ENCODE measurements at regions of chr7 and their contacts with region 1.

Region 1: DNA sequence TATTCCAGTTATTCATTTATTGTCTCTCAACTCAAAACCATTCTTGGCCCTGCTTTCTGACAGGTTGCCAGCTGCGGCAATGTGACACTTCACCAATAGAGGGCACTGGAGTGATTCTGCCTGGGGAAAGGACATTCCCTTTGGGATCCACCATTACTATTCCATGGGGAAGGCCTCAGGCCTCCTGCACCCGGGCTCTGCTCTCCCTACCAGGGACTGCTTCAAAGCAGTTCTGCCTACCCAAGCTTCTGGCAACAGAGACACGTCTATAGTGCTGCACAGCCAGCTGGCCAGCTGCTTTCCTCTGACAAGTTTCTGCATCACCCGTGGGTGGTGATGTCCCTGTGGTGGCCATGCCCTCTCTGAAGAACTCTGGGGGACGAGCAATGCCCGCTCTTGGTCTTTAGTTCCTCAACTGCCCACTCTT is 163.8 kb downstream of the ELMO1 start:
- DNase-seq: peak; percentile 43
- CTCF ChIP-seq: peak; percentile 89

Region 2: GRCh38 chr7:36615852-36616540 is 668.8 kb before region 1 on chr7:
- in situ Hi-C with region 1: no loop called
- DNase-seq: no peak
- CTCF ChIP-seq: no peak

Region 3: GRCh38 chr7:36840904-36841303 is 443.9 kb before region 1 on chr7:
- in situ Hi-C with region 1: no loop called
- DNase-seq: no peak
- CTCF ChIP-seq: no peak

Region 4: GRCh38 chr7:37081436-37081835 is 203.4 kb before region 1 on chr7:
- in situ Hi-C with region 1: no loop called
- DNase-seq: no peak
- CTCF ChIP-seq: no peak

Region 5: GRCh38 chr7:37342688-37343471 is 58.1 kb after region 1 on chr7:
- in situ Hi-C with region 1: loop called (anchors 5 kb)
- DNase-seq: no peak
- CTCF ChIP-seq: peak; percentile 33

Region 6: DNA sequence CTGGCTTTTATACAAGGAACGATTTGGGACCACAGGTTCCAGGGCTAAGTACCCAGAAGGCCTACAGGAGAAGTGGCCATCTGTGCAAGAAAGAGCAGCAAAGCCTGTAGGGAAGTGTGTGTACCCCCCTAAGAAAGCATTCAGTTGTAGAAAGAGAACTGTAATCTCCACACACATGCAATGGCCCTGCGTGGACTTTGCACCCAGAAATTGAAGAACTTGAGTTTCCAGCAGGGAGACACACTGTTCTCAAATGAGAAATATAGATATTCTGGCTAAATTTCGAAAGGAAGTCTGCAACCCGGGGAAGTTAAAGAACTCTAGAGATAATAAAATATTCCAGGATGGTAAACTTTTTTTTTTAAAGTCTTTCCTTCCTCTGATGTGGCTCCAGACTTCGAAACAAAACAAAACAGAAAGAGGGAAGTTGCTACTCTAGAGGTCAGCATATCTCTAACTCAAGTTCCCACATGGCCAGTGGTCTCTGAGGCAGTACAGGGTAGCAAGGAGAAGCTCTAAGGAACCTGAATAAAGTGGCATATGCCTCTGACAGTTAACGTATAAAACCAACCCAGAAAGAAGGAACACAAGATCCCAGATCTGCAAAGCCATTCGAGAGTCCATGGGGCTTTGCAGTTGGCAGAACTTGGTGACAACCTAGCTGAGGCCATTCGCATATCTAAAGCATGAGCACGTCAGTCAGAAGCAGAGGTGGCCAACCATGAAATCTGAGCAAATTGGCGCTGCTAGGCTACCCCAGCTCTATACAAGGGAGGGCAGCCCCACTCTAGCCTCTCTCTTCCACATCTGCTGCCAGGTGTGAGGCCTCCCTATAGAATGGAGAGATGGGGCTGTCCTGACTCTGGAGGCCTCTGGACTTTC is 107.2 kb after region 1 on chr7:
- in situ Hi-C with region 1: no loop called
- DNase-seq: no peak
- CTCF ChIP-seq: no peak

Measured in GM13977 (cell line).